ENCODE measurements at regions of chr12 and their contacts with region 1.

Region 1: DNA sequence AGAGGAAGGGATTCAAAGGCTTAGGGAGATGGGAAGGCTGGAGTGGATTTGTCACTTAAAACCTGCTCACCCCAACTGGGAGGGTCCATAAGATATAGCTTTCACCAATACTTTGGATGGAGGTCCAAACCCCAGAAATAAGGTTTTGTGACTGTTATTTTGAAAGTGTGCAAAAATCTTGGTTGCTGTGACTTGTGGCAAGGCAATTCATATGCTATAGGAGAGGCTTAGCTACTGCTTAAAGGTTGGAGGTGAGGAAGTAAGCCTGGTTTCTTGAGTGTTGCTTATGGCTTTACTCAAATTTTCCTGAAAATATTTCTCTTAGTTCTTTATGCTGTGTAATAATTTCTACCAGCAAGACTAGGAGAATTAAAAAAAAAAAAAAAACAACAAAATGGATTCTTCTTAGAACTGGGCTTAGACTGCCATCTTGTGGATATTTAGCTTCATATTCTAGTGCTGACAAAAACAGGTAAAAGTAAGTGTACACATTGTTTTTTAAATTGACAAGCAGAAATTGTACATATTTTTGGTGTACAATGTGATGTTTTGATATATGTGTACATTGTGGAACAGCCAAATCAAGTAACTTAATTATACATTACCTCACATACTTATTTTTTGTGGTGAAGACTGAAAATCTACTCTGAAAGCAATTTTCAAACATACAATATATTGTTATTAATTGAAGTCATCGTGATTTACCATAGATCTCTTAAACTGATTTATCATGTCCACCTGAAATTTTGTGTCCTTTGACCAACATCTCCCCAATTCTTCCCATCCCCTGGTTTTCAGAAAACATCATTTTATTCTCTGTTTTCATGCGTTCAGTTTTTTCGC is 23.0 kb downstream of the PDE6H start:
- DNase-seq: peak in 2 of 5 donors; percentile 57 to 66
- H3K4me3 ChIP-seq: peak overlapping the region; percentile 2
- H3K4me3 Mint-ChIP-seq: peak overlapping the region in 2 of 7 donors; percentile 12 to 27
- H3K27ac ChIP-seq: no peak overlapping the region
- H3K27ac Mint-ChIP-seq: peak overlapping the region in 7 of 8 donors; percentile 12 to 71 (median 61)
- H3K4me1 ChIP-seq: peaks cover 24% of the 10 kb centered on the region
- H3K4me1 Mint-ChIP-seq: peaks cover 23 to 31% (median 29%) of the 10 kb centered on the region in 3 donors
- H3K27me3 ChIP-seq: no peaks in the 10 kb centered on the region
- H3K27me3 Mint-ChIP-seq: peaks cover 2 to 9% of the 10 kb centered on the region in 2 donors

Region 2: GRCh38 chr12:14845350-14845750 is 150.5 kb before region 1 on chr12:
- CTCF ChIA-PET with region 1: interaction called, 24 read pairs
- POLR2A ChIA-PET with region 1: no interaction called
- DNase-seq: peak in 3 of 5 donors; percentile 15 to 53 (median 45)
- H3K4me3 ChIP-seq: no peak overlapping the region
- H3K4me3 Mint-ChIP-seq: peak overlapping the region in 1 of 7 donors; percentile 24
- H3K27ac ChIP-seq: no peak overlapping the region
- H3K27ac Mint-ChIP-seq: no peak overlapping the region
- H3K4me1 ChIP-seq: no peaks in the 10 kb centered on the region
- H3K4me1 Mint-ChIP-seq: peaks cover 0 to 4% (median 3%) of the 10 kb centered on the region in 3 donors
- H3K27me3 ChIP-seq: no peaks in the 10 kb centered on the region
- H3K27me3 Mint-ChIP-seq: peaks cover 3 to 13% of the 10 kb centered on the region in 2 donors

Region 3: GRCh38 chr12:15220994-15221885 is 225.4 kb after region 1 on chr12 and contains the start of gene RERG:
- CTCF ChIA-PET with region 1: interaction called, 12 read pairs
- POLR2A ChIA-PET with region 1: interaction called, 3 read pairs
- DNase-seq: peak; percentile 47 to 75 (median 61)
- H3K4me3 ChIP-seq: peak within 1 kb of the TSS; percentile 36
- H3K4me3 Mint-ChIP-seq: peak within 1 kb of the TSS in 6 of 7 donors; percentile 59 to 82 (median 70)
- H3K27ac ChIP-seq: no peak within 1 kb of the TSS
- H3K27ac Mint-ChIP-seq: peak within 1 kb of the TSS in 1 of 8 donors; percentile 56
- H3K4me1 ChIP-seq: peaks cover 9% of the 10 kb centered on the region
- H3K4me1 Mint-ChIP-seq: peaks cover 4 to 14% (median 13%) of the 10 kb centered on the region in 3 donors
- H3K27me3 ChIP-seq: peaks cover 8% of the 10 kb centered on the region
- H3K27me3 Mint-ChIP-seq: peaks cover 15 to 34% of the 10 kb centered on the region in 2 donors
- total RNA-seq, gene RERG: not detected

Measured in CD8-positive, alpha-beta memory T cell (primary cell).